Activated T-helper 1 cell treated with anti-CD3 and anti-CD28 coated beads, Interleukin-12 subunit alpha, Interleukin-12 subunit beta, Interleukin-2, Interleukin-4 antibody, amounts not matched to agents 30 ng/mL and 10 ng/mL and 1 ng/mL, durations not matched to agents 14 hours and 24 hours and 36 hours (primary cell): ENCODE measurements at regions of chr5 and their contacts with region 1.

Region 1: GRCh38 chr5:134813407-134813806 is 32.4 kb upstream of the C5orf24 start:
- DNase-seq: peak; percentile 29
- H3K4me3 Mint-ChIP-seq: no peak overlapping the region
- H3K27ac Mint-ChIP-seq: peak overlapping the region; percentile 77
- H3K4me1 Mint-ChIP-seq: peaks cover 9% of the 10 kb centered on the region
- H3K27me3 Mint-ChIP-seq: no peaks in the 10 kb centered on the region

Region 2: GRCh38 chr5:134659456-134659855 is 154.0 kb before region 1 on chr5:
- intact Hi-C with region 1: no loop called
- DNase-seq: no peak
- H3K4me3 Mint-ChIP-seq: no peak overlapping the region
- H3K27ac Mint-ChIP-seq: no peak overlapping the region
- H3K4me1 Mint-ChIP-seq: peaks cover 22% of the 10 kb centered on the region
- H3K27me3 Mint-ChIP-seq: no peaks in the 10 kb centered on the region

Region 3: DNA sequence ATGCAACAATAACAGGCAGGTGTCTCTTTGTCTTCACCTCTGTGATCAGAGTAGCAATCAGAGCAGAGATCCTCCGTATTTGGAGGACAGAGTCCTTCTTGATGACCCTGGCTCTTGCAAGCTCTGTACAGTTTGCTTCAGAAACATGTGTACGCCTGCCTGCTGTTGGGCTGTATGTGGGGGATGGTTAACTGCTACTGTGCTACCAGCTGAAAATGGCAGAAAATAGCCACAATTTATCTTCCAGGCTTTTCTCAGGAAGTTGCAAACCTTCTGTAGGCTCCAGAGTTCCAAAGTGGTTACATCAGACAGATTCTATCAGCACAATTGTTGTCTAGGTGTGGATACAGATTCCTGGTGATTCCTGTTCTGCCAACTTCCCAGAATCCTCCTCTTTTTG is 19.3 kb before region 1 on chr5:
- intact Hi-C with region 1: no loop called
- DNase-seq: no peak
- H3K4me3 Mint-ChIP-seq: no peak overlapping the region
- H3K27ac Mint-ChIP-seq: no peak overlapping the region
- H3K4me1 Mint-ChIP-seq: no peaks in the 10 kb centered on the region
- H3K27me3 Mint-ChIP-seq: no peaks in the 10 kb centered on the region

Region 4: DNA sequence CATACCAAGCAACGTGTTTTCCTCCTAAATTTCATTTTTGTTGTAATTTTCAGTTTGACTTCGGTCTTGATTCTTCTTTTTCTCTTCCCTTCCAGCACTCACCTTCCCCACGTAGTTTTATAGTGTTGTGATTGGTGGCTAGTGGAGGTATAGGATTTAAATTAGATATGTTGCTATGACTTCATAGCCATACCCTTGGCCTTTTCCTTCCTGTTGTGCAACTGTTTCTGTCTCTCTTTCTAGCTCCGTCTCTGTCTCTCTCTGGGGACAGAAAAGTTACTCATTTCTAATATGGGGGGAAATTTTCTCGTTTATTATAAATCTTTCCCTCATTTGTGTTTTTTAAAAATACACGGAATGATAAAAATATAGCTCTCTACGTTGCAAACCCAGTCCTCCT is 11.8 kb after region 1 on chr5:
- intact Hi-C with region 1: no loop called
- DNase-seq: no peak
- H3K4me3 Mint-ChIP-seq: no peak overlapping the region
- H3K27ac Mint-ChIP-seq: no peak overlapping the region
- H3K4me1 Mint-ChIP-seq: no peaks in the 10 kb centered on the region
- H3K27me3 Mint-ChIP-seq: no peaks in the 10 kb centered on the region

Region 5: GRCh38 chr5:134873987-134874830 is 60.8 kb after region 1 on chr5 and contains the start of gene TXNDC15:
- intact Hi-C with region 1: loop called (anchors 2 kb)
- DNase-seq: peak; percentile 82
- H3K4me3 Mint-ChIP-seq: peak within 1 kb of the TSS; percentile 100
- H3K27ac Mint-ChIP-seq: peak within 1 kb of the TSS; percentile 98
- H3K4me1 Mint-ChIP-seq: peaks cover 43% of the 10 kb centered on the region
- H3K27me3 Mint-ChIP-seq: no peaks in the 10 kb centered on the region
- total RNA-seq, gene TXNDC15: 57.1 and 67.2 TPM in 2 replicates